MCF 10A (cell line): ENCODE measurements at regions of chr1 and their contacts with region 1.

Region 1: GRCh38 chr1:165129568-165130164 is 226.8 kb downstream of the LMX1A start:
- DNase-seq: peak; percentile 91
- H3K4me3 Mint-ChIP-seq: no peak overlapping the region
- H3K27ac Mint-ChIP-seq: no peak overlapping the region
- H3K4me1 Mint-ChIP-seq: peaks cover 5% of the 10 kb centered on the region
- H3K27me3 Mint-ChIP-seq: peaks cover 82% of the 10 kb centered on the region
- CTCF ChIP-seq: peak; percentile 79

Region 2: DNA sequence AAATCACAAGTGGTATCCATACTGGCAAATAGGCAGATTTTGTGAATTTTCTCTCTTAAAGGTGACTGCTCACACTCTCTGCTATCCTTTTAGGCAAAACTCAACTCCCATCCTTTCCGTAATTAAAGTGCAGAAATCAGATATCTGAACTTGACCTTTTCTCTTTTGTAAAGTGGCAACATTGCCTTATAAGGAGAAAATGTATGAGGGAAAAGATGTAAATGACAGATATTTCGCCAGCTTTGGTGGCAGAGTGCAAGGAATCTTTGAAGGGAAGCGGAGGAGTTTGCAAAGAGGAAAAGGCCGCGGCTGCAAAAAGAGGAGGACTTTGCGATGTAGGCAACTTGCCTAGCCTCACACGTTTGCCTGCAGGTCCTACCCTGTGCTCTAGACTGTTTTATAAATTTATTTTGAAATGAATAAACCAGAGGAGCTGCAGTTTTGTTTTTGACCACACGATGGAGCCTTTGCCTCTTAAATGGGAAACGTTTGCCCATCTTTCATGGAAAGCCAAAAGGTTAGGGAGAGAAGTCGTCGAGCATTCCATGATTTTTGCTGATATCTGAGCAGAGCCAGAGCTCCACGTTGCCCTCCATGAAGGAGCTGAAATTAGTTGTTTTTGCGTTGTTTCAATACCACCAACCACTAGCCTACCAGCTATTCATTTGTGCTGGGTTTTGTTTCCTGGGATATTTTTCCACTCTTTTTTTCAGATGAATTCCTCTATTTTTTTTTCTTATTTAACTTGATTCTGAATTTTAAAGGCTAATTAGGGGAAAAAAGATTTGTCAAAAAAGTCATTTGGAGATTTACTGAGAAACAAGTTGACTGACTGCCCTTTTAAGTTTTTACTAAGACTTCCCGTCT is 15.4 kb before region 1 on chr1:
- CTCF ChIA-PET with region 1: interaction called, 174 read pairs
- POLR2A ChIA-PET with region 1: interaction called, 3 read pairs
- intact Hi-C with region 1: loop called (anchors 1 kb)
- DNase-seq: peak; percentile 85
- H3K4me3 Mint-ChIP-seq: no peak overlapping the region
- H3K27ac Mint-ChIP-seq: no peak overlapping the region
- H3K4me1 Mint-ChIP-seq: peaks cover 17% of the 10 kb centered on the region
- H3K27me3 Mint-ChIP-seq: peaks cover 16% of the 10 kb centered on the region
- CTCF ChIP-seq: peak; percentile 96

Region 3: DNA sequence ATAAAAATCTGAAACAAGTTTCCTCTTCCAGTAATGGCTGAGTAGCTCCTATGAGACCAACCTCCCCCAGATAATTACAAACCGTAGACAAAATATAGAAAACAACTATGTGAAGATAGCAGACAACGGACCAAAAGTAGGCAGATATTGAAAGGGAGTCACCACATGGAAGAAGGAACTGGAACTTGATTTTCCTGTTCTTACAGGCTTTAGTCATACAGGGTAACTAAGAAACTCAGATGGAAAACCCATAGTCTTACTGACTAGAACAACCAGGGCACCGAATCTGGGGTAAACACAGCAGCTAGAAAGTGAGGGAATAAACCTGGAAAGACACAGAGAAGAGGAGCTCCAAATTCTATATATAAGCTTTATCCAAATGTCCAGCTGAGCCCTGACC is 200.8 kb after region 1 on chr1:
- CTCF ChIA-PET with region 1: interaction called, 10 read pairs
- POLR2A ChIA-PET with region 1: no interaction called
- intact Hi-C with region 1: no loop called
- DNase-seq: no peak
- H3K4me3 Mint-ChIP-seq: no peak overlapping the region
- H3K27ac Mint-ChIP-seq: no peak overlapping the region
- H3K4me1 Mint-ChIP-seq: no peaks in the 10 kb centered on the region
- H3K27me3 Mint-ChIP-seq: peaks cover 32% of the 10 kb centered on the region
- CTCF ChIP-seq: no peak

Region 4: GRCh38 chr1:165383067-165383466 is 253.4 kb after region 1 on chr1:
- CTCF ChIA-PET with region 1: interaction called, 12 read pairs
- POLR2A ChIA-PET with region 1: no interaction called
- intact Hi-C with region 1: no loop called
- DNase-seq: peak; percentile 95
- H3K4me3 Mint-ChIP-seq: no peak overlapping the region
- H3K27ac Mint-ChIP-seq: peak overlapping the region; percentile 5
- H3K4me1 Mint-ChIP-seq: peaks cover 19% of the 10 kb centered on the region
- H3K27me3 Mint-ChIP-seq: peaks cover 22% of the 10 kb centered on the region
- CTCF ChIP-seq: no peak